ENCODE measurements at regions of chr20 and their contacts with region 1.

Region 1: DNA sequence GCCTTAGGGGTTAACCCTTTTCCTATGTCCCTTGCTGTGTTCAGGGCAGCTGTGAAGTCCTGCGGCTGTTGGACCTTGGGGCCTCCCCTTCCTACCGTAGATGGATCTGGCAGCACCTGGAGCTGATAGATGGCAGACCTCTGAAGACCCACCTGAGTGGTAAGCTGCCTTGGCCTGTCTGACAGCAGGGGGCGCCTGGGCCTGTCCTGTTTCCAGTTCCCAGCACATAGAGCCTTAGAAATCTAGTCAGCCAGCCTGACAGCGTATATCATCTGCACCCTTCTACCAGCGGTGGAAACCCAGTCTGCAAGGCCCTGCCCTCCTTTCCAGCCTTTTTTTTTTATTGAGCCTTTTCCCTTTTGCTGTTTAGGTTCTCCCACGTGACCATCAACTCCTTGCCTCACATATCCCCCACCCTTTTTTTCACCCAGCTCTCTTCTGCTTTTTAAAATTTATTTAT is 26.6 kb downstream of the CNBD2 start:
- DNase-seq: peak; percentile 89
- H3K4me3 Mint-ChIP-seq: no peak overlapping the region
- H3K27ac Mint-ChIP-seq: no peak overlapping the region
- H3K4me1 Mint-ChIP-seq: peaks cover 2% of the 10 kb centered on the region
- H3K27me3 Mint-ChIP-seq: no peaks in the 10 kb centered on the region

Region 2: DNA sequence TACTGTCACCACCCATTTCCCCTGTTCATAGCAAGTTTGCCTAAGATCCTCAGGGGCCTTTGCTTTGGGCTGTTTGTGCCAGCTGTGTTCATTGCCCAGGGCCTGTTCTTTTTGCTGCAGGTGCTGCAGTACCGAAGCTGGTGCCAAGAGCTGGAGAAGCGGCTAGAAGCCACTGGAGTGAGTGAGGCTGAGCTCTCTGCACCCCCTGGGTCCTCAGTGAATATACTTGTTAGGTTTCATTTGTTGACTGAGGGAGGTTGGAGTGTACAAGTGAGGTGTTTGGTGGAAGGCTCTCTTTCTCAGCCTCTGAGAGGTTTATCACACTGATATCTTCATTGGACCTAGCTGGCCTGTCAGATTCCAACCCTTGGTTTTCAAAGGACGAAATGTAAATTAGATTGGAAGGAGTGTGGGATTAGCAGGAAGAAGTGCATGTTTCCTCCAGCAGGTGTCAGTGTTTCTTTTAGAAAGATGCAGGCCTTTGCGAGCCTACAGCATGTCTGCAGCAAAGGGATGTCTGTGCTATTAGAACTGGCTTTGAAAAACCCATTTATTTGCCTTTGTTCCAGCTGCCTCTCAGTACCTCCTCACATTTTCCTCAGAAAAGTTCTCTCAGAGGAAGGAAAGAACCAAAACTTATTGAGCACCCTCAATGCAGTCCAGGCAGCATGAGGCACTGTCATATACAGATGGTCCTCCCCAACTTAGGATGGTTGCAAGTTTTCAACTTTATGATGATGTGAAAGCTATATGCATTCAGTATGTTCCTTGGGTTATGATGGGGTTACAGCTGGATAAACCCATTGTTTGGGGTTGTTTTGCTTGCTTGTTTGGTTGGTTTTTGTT is 531.3 kb before region 1 on chr20:
- CTCF ChIA-PET with region 1: interaction called, 3 read pairs
- intact Hi-C with region 1: loop called (anchors 5 kb)
- DNase-seq: peak; percentile 71
- H3K4me3 Mint-ChIP-seq: no peak overlapping the region
- H3K27ac Mint-ChIP-seq: no peak overlapping the region
- H3K4me1 Mint-ChIP-seq: no peaks in the 10 kb centered on the region
- H3K27me3 Mint-ChIP-seq: no peaks in the 10 kb centered on the region

Region 3: DNA sequence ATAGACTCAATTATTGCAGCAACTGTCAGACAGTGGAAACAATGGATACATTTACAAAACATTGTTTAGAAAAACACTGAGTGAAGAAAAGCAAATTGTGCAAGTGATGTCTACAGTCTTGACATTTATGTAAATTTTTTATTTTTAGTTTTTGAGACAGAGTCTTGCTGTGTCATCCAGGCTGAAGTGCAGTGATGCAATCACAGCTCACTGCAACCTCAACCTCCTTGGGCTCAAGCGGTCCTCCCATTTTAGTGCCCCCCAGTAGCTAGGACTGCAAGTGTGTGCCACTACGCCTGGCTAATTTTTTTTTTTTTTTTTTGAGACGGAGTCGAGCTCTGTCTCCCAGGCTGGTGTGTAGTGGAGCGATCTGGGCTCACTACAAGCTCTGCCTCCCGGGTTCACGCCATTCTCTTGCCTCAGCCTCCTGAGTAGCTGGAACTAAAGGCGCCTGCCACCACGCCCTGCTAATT is 16.9 kb before region 1 on chr20:
- CTCF ChIA-PET with region 1: interaction called, 73 read pairs
- intact Hi-C with region 1: no loop called
- DNase-seq: no peak
- H3K4me3 Mint-ChIP-seq: no peak overlapping the region
- H3K27ac Mint-ChIP-seq: no peak overlapping the region
- H3K4me1 Mint-ChIP-seq: no peaks in the 10 kb centered on the region
- H3K27me3 Mint-ChIP-seq: no peaks in the 10 kb centered on the region

Region 4: GRCh38 chr20:36132802-36133211 is 137.8 kb after region 1 on chr20:
- CTCF ChIA-PET with region 1: interaction called, 263 read pairs
- intact Hi-C with region 1: loop called (anchors 1 kb)
- DNase-seq: no peak
- H3K4me3 Mint-ChIP-seq: no peak overlapping the region
- H3K27ac Mint-ChIP-seq: no peak overlapping the region
- H3K4me1 Mint-ChIP-seq: no peaks in the 10 kb centered on the region
- H3K27me3 Mint-ChIP-seq: no peaks in the 10 kb centered on the region

Region 5: GRCh38 chr20:36154700-36155628 is 159.9 kb after region 1 on chr20 and contains the start of gene EPB41L1:
- CTCF ChIA-PET with region 1: interaction called, 12 read pairs
- intact Hi-C with region 1: no loop called
- DNase-seq: peak; percentile 20
- H3K4me3 Mint-ChIP-seq: peak within 1 kb of the TSS; percentile 47
- H3K27ac Mint-ChIP-seq: no peak within 1 kb of the TSS
- H3K4me1 Mint-ChIP-seq: peaks cover 4% of the 10 kb centered on the region
- H3K27me3 Mint-ChIP-seq: peaks cover 20% of the 10 kb centered on the region
- total RNA-seq, gene EPB41L1: 0.57 to 1.1 TPM

Region 6: DNA sequence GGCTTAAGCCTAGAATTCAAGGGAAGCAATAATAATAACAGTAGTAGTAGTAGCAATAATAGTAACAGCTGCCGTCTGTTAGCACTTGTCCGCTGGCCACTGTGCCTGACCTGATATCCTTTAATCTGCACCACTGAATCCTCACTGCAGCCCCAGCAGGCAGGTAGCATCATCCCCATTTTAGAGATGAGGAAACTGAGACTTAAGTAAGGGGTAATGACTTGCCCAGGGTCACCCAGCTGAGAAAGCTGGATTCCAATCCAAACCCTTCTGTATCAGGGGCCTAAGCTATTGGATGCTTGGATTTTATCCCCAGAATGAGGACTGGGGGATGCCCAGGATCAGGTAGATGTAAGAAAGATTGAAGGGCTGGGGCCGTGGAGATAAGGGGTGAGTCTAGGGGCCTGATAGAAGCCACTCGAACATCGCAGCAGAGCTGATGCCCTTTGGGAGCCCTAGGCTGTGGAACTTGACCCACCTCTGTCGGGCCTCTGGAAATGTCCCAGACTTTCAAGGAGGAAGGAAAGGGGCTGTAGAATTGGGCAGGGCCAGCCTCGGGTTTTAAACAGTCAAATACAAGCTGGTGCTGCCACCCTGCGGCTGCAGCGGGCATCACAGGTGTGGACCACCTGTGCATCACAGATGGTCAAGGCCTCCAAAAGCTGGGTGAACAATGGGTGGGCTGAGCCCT is 444.2 kb after region 1 on chr20:
- CTCF ChIA-PET with region 1: interaction called, 7 read pairs
- intact Hi-C with region 1: loop called (anchors 1 kb)
- DNase-seq: peak; percentile 76
- H3K4me3 Mint-ChIP-seq: no peak overlapping the region
- H3K27ac Mint-ChIP-seq: no peak overlapping the region
- H3K4me1 Mint-ChIP-seq: peaks cover 2% of the 10 kb centered on the region
- H3K27me3 Mint-ChIP-seq: no peaks in the 10 kb centered on the region

Measured in activated naive CD4-positive, alpha-beta T cell treated with anti-CD3 and anti-CD28 coated beads for 36 hours (primary cell).